Activated B cell treated with CpG ODN at 0.5 μM for 24 hours (primary cell): ENCODE measurements at regions of chrX and their contacts with region 1.

Region 1: DNA sequence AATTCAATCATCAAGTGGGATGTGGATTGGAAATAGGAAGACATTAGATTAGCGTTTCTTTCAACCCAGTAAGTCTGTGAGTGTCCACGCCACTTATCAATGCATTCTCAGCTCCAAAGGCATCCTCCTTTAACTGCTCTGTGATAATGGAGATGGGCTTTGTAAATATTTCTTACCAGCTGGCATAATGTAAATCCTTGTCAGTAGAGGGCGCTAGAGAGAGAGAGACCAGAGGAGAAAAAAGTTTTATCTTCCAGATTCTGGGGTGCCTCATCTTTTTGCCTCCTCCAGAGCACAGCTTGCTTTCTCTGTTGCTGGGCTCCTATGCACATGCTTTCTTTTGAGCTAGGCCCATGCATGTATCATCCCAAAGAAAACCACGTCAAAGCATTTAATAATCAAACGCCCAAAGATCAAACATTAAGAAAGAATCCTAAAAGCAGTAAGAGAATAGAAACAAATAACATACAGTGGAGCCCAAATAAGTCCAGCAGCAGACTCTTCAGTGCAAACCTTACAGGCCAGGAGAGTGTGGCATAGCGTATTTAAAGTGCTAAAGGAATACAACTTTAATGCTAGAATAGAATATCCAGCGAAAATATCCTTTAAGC is 9.6 kb upstream of the MTMR1 start:
- DNase-seq: no peak
- ATAC-seq: peak; percentile 18
- H3K4me3 Mint-ChIP-seq: no peak overlapping the region
- H3K27ac Mint-ChIP-seq: no peak overlapping the region
- H3K4me1 Mint-ChIP-seq: peaks cover 7% of the 10 kb centered on the region
- H3K27me3 Mint-ChIP-seq: no peaks in the 10 kb centered on the region
- CTCF ChIP-seq: no peak

Region 2: DNA sequence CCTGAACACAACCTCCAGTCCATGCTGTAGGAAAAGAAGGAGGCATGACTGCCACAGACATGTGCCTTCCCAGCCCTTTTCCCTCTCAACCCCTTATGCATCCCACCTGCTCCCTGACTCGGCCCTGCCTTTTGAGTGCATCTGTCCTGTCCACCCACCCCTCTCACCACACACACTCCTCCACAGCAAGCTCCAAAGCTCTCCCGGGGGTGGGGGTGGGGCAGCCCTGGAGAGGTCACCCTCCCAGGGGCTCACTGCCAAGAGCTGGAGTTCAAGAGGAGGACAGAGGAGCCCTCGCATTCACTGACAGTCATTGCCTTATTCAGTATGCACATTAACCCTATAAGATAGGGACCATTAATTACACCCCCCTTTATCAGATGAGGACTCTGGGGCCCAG is 367.1 kb before region 1 on chrX:
- CTCF ChIA-PET with region 1: no interaction called
- POLR2A ChIA-PET with region 1: no interaction called
- intact Hi-C with region 1: no loop called
- DNase-seq: no peak
- ATAC-seq: no peak
- H3K4me3 Mint-ChIP-seq: no peak overlapping the region
- H3K27ac Mint-ChIP-seq: no peak overlapping the region
- H3K4me1 Mint-ChIP-seq: no peaks in the 10 kb centered on the region
- H3K27me3 Mint-ChIP-seq: peaks cover 2% of the 10 kb centered on the region
- CTCF ChIP-seq: no peak

Region 3: DNA sequence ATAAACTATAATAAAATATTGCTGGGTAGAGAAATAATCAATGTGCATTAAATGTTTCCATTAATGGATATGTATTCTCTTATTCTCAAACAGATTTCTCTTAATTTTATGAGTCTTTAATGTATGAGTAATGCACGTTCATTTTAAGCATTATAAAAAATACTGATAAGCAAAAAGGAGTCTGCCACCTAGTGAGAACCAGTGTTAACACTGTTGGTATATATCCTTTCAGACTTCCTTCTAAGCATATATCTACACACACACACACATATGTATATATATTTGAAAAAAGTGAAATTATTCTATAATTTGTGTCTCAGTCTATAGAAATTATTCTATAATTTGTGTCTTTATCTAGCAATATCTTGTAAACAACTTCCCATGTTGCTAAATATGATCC is 40.4 kb before region 1 on chrX:
- CTCF ChIA-PET with region 1: no interaction called
- POLR2A ChIA-PET with region 1: no interaction called
- intact Hi-C with region 1: no loop called
- DNase-seq: no peak
- ATAC-seq: no peak
- H3K4me3 Mint-ChIP-seq: no peak overlapping the region
- H3K27ac Mint-ChIP-seq: no peak overlapping the region
- H3K4me1 Mint-ChIP-seq: no peaks in the 10 kb centered on the region
- H3K27me3 Mint-ChIP-seq: no peaks in the 10 kb centered on the region
- CTCF ChIP-seq: no peak

Region 4: GRCh38 chrX:150704030-150704613 is 20.5 kb after region 1 on chrX:
- CTCF ChIA-PET with region 1: interaction called, 12 read pairs
- POLR2A ChIA-PET with region 1: no interaction called
- intact Hi-C with region 1: no loop called
- DNase-seq: no peak
- ATAC-seq: no peak
- H3K4me3 Mint-ChIP-seq: no peak overlapping the region
- H3K27ac Mint-ChIP-seq: peak overlapping the region; percentile 35
- H3K4me1 Mint-ChIP-seq: peaks cover 36% of the 10 kb centered on the region
- H3K27me3 Mint-ChIP-seq: no peaks in the 10 kb centered on the region
- CTCF ChIP-seq: no peak